ENCODE measurements at regions of chr1 and their contacts with region 1.

Region 1: GRCh38 chr1:207797229-207797961 is 45.5 kb downstream of the CD46 start:
- DNase-seq: peak; percentile 46 to 69 (median 63)
- ATAC-seq: peak; percentile 88
- H3K4me3 ChIP-seq: no peak overlapping the region
- H3K4me3 Mint-ChIP-seq: no peak overlapping the region
- H3K27ac ChIP-seq: no peak overlapping the region
- H3K27ac Mint-ChIP-seq: peak overlapping the region in 3 of 9 donors; percentile 48 to 72 (median 67)
- H3K4me1 ChIP-seq: peaks cover 9 to 20% of the 10 kb centered on the region in 2 donors
- H3K4me1 Mint-ChIP-seq: peaks cover 24 to 48% (median 35%) of the 10 kb centered on the region in 7 donors
- H3K27me3 ChIP-seq: no peaks in the 10 kb centered on the region
- H3K27me3 Mint-ChIP-seq: no peaks in the 10 kb centered on the region

Region 2: DNA sequence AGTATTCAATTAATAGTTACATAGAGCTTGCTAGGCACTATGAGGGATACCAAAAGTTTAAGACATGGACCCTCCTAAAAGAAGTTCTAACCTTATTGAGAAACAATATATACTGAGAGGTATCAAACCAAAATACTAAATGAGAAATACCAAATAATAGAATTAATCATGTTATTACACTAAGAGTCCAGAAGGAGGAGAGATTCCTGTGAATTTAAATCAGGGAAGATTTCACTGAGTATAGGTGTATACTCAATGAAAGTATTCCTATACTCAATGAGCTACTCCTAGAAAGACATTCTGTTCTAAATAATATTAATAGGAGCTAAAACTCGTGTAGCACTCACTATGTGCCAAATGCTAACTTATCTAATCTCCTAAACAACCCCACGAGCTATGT is 143.1 kb before region 1 on chr1:
- CTCF ChIA-PET with region 1: no interaction called
- POLR2A ChIA-PET with region 1: no interaction called
- intact Hi-C with region 1: loop called in 1 of 2 experiments (anchors 1 kb)
- DNase-seq: no peak
- ATAC-seq: no peak
- H3K4me3 ChIP-seq: no peak overlapping the region
- H3K4me3 Mint-ChIP-seq: no peak overlapping the region
- H3K27ac ChIP-seq: no peak overlapping the region
- H3K27ac Mint-ChIP-seq: no peak overlapping the region
- H3K4me1 ChIP-seq: no peaks in the 10 kb centered on the region
- H3K4me1 Mint-ChIP-seq: no peaks in the 10 kb centered on the region
- H3K27me3 ChIP-seq: no peaks in the 10 kb centered on the region
- H3K27me3 Mint-ChIP-seq: peaks cover 0 to 32% (median 9%) of the 10 kb centered on the region in 5 donors

Region 3: DNA sequence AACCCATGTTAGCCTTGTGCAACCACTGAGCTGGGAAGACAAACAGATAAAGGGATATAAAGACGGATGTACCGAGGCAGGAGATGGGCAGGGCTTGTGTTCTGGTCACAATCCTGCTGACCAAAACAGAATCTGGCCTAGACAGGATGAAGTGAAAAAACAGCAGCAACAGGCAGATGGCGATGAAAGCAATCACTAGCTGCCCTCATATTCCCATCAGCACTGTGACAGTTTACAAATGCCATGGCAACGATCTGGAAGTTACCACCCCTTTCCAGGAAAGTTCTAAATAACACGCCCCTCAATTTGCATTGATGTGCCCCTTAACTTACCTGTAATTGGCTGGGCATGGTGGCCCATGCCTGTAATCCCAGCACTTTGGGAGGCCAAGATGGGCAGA is 86.1 kb before region 1 on chr1:
- CTCF ChIA-PET with region 1: interaction called, 6 read pairs
- POLR2A ChIA-PET with region 1: interaction called, 10 read pairs
- intact Hi-C with region 1: loop called (anchors 1 kb)
- DNase-seq: no peak
- ATAC-seq: no peak
- H3K4me3 ChIP-seq: no peak overlapping the region
- H3K4me3 Mint-ChIP-seq: no peak overlapping the region
- H3K27ac ChIP-seq: no peak overlapping the region
- H3K27ac Mint-ChIP-seq: peak overlapping the region in 2 of 9 donors; percentile 68 to 71
- H3K4me1 ChIP-seq: no peaks in the 10 kb centered on the region
- H3K4me1 Mint-ChIP-seq: peaks cover 0 to 2% (median 0%) of the 10 kb centered on the region in 7 donors
- H3K27me3 ChIP-seq: no peaks in the 10 kb centered on the region
- H3K27me3 Mint-ChIP-seq: peaks cover 0 to 20% (median 0%) of the 10 kb centered on the region in 5 donors

Region 4: DNA sequence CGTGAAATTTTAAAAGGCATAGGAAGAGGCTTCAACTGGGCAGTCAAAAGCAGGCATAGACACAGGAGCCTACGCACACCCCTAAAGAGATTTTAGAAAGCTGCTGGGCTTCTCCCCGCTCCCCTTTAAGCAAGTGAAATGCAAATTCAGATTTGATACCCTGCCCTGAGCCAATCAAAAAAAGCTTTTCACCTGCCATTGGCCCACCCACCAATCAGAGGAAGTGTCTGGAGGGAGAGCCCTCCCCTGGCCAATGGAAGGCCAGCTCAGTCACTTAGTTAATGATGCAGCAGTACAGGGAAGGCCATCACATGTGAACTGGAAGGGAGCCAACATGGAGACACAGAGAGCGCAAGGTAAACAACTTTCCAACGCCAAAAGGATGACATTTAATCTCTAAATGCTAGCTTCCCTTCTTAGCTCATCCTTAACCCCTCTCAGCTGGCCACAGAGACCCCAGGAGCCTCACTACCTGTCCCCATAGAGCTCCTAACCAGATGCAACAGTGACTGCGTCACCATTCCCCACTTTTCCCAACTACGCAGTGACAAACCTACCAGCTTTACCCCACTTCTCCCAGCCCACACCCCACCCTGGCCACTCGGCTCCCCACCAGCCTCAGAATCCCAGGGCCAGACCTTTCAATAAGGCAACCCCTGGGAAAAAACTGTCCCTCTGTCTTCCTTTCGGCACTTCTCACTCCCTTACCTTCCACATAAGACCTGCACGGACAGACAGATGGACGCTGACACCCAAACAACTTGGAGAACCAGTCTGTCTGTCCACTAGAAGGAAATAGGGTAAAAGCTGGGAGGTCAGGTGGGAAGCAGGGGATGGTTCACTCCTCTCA is 25.4 kb after region 1 on chr1:
- CTCF ChIA-PET with region 1: interaction called, 10 read pairs
- POLR2A ChIA-PET with region 1: interaction called, 16 read pairs
- intact Hi-C with region 1: loop called (anchors 1 to 2 kb)
- DNase-seq: peak; percentile 35 to 89 (median 86)
- ATAC-seq: peak; percentile 65
- H3K4me3 ChIP-seq: peak overlapping the region; percentile 87
- H3K4me3 Mint-ChIP-seq: peak overlapping the region; percentile 88 to 96 (median 95)
- H3K27ac ChIP-seq: peak overlapping the region; percentile 88
- H3K27ac Mint-ChIP-seq: peak overlapping the region; percentile 96 to 100 (median 98)
- H3K4me1 ChIP-seq: peaks cover 29 to 61% of the 10 kb centered on the region in 2 donors
- H3K4me1 Mint-ChIP-seq: peaks cover 72 to 96% (median 89%) of the 10 kb centered on the region in 7 donors
- H3K27me3 ChIP-seq: no peaks in the 10 kb centered on the region
- H3K27me3 Mint-ChIP-seq: peaks cover 0 to 6% (median 0%) of the 10 kb centered on the region in 5 donors

Region 5: GRCh38 chr1:207868774-207869721 is 71.7 kb after region 1 on chr1:
- CTCF ChIA-PET with region 1: interaction called, 18 read pairs
- POLR2A ChIA-PET with region 1: interaction called, 3 read pairs
- intact Hi-C with region 1: no loop called
- DNase-seq: peak; percentile 57 to 86 (median 79)
- ATAC-seq: peak; percentile 79
- H3K4me3 ChIP-seq: peak overlapping the region; percentile 86
- H3K4me3 Mint-ChIP-seq: peak overlapping the region; percentile 74 to 99 (median 94)
- H3K27ac ChIP-seq: peak overlapping the region; percentile 78
- H3K27ac Mint-ChIP-seq: peak overlapping the region; percentile 91 to 98 (median 93)
- H3K4me1 ChIP-seq: peaks cover 39 to 80% of the 10 kb centered on the region in 2 donors
- H3K4me1 Mint-ChIP-seq: peaks cover 52 to 85% (median 77%) of the 10 kb centered on the region in 7 donors
- H3K27me3 ChIP-seq: no peaks in the 10 kb centered on the region
- H3K27me3 Mint-ChIP-seq: no peaks in the 10 kb centered on the region

Region 6: GRCh38 chr1:207885129-207886032 is 88.0 kb after region 1 on chr1:
- CTCF ChIA-PET with region 1: interaction called, 15 read pairs
- POLR2A ChIA-PET with region 1: no interaction called
- intact Hi-C with region 1: no loop called
- DNase-seq: peak; percentile 50 to 75 (median 68)
- ATAC-seq: peak; percentile 86
- H3K4me3 ChIP-seq: no peak overlapping the region
- H3K4me3 Mint-ChIP-seq: peak overlapping the region in 5 of 10 donors; percentile 21 to 91 (median 29)
- H3K27ac ChIP-seq: no peak overlapping the region
- H3K27ac Mint-ChIP-seq: peak overlapping the region; percentile 63 to 99 (median 96)
- H3K4me1 ChIP-seq: peaks cover 21 to 25% of the 10 kb centered on the region in 2 donors
- H3K4me1 Mint-ChIP-seq: peaks cover 34 to 47% (median 44%) of the 10 kb centered on the region in 7 donors
- H3K27me3 ChIP-seq: no peaks in the 10 kb centered on the region
- H3K27me3 Mint-ChIP-seq: peaks cover 0 to 14% (median 5%) of the 10 kb centered on the region in 5 donors

Region 7: GRCh38 chr1:208047476-208047934 is 250.1 kb after region 1 on chr1:
- CTCF ChIA-PET with region 1: no interaction called
- POLR2A ChIA-PET with region 1: no interaction called
- intact Hi-C with region 1: no loop called
- DNase-seq: no peak
- ATAC-seq: no peak
- H3K4me3 ChIP-seq: no peak overlapping the region
- H3K4me3 Mint-ChIP-seq: no peak overlapping the region
- H3K27ac ChIP-seq: no peak overlapping the region
- H3K27ac Mint-ChIP-seq: no peak overlapping the region
- H3K4me1 ChIP-seq: no peaks in the 10 kb centered on the region
- H3K4me1 Mint-ChIP-seq: peaks cover 0 to 20% (median 7%) of the 10 kb centered on the region in 7 donors
- H3K27me3 ChIP-seq: no peaks in the 10 kb centered on the region
- H3K27me3 Mint-ChIP-seq: peaks cover 10 to 30% (median 14%) of the 10 kb centered on the region in 5 donors

Measured in naive thymus-derived CD4-positive, alpha-beta T cell (primary cell).